Activated CD8-positive, alpha-beta T cell treated with anti-CD3 and anti-CD28 coated beads, Interleukin-2, amount 10 ng/mL, durations not matched to agents 7 days and 5 days (primary cell): ENCODE measurements at regions of chr12 and their contacts with region 1.

Region 1: GRCh38 chr12:47276621-47277309 is 197.0 kb upstream of the AMIGO2 start:
- DNase-seq: peak; percentile 83
- ATAC-seq: peak; percentile 93
- H3K4me3 Mint-ChIP-seq: peak overlapping the region; percentile 73
- H3K27ac Mint-ChIP-seq: peak overlapping the region; percentile 88
- H3K4me1 Mint-ChIP-seq: peaks cover 68% of the 10 kb centered on the region
- H3K27me3 Mint-ChIP-seq: no peaks in the 10 kb centered on the region

Region 2: DNA sequence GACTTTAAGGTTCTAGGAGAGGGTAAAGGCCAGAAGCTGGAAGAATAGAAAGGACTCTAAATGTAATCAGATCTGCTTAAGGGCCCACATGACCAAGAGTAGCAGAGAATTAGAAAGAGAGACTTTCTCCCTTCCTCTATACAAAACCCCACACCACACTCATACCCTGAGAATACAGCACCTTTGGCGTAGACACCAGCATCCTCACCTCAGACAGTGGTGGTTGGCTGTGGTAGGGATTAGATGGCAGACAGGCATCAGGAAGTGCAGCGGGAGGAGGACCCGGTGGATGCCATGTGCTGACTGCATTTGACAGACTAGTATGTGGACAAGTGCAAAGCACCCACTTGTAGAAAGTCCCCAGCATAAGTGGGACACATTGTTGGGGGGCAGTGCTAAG is 98.8 kb before region 1 on chr12:
- CTCF ChIA-PET with region 1: no interaction called
- POLR2A ChIA-PET with region 1: no interaction called
- DNase-seq: no peak
- ATAC-seq: no peak
- H3K4me3 Mint-ChIP-seq: no peak overlapping the region
- H3K27ac Mint-ChIP-seq: no peak overlapping the region
- H3K4me1 Mint-ChIP-seq: peaks cover 15% of the 10 kb centered on the region
- H3K27me3 Mint-ChIP-seq: no peaks in the 10 kb centered on the region

Region 3: DNA sequence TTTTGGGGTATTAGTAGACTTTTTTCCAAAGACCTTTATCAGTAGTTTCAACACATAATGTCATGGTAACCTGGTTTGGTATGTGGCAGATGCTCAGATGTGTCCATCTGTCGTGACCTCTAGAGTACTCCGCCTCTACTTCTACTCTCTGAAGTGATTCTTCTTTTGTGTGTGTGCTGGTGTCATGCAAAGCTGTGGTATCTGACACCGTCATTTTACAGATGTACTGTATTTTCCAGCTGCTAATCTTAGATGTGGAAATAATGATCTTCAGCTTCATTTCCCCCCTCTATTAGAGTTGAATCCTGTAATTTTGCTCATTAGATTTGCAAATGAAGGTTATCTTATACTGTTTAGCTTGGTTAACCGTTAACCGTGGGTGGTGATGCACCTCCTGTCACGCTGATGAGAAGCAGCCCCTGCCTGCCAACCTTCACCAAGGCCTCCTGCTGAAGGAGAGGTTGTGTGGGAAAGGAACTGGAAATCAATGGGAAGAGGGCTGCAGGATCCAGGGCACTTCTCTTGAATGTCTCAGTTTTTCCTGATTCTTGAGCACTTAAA is 25.4 kb after region 1 on chr12:
- CTCF ChIA-PET with region 1: interaction called, 13 read pairs
- POLR2A ChIA-PET with region 1: interaction called, 10 read pairs
- DNase-seq: no peak
- ATAC-seq: peak; percentile 66
- H3K4me3 Mint-ChIP-seq: peak overlapping the region; percentile 5
- H3K27ac Mint-ChIP-seq: peak overlapping the region; percentile 75
- H3K4me1 Mint-ChIP-seq: peaks cover 60% of the 10 kb centered on the region
- H3K27me3 Mint-ChIP-seq: no peaks in the 10 kb centered on the region

Region 4: GRCh38 chr12:47307680-47308399 is 31.1 kb after region 1 on chr12:
- CTCF ChIA-PET with region 1: interaction called, 13 read pairs
- POLR2A ChIA-PET with region 1: interaction called, 10 read pairs
- DNase-seq: peak; percentile 76
- ATAC-seq: peak; percentile 92
- H3K4me3 Mint-ChIP-seq: peak overlapping the region; percentile 64
- H3K27ac Mint-ChIP-seq: peak overlapping the region; percentile 77
- H3K4me1 Mint-ChIP-seq: peaks cover 59% of the 10 kb centered on the region
- H3K27me3 Mint-ChIP-seq: no peaks in the 10 kb centered on the region